A549 (cell line): ENCODE measurements at regions of chr11 and their contacts with region 1.

Region 1: GRCh38 chr11:66408488-66409214 is 12.2 kb upstream of the NPAS4 start:
- DNase-seq: peak; percentile 87 to 91
- ATAC-seq: peak; percentile 72 to 88
- H3K4me3 ChIP-seq: peak overlapping the region; percentile 47
- H3K27ac ChIP-seq: peak overlapping the region in 1 of 2 experiments; percentile 38; a peak in 1 of 6 replicates
- H3K4me1 ChIP-seq: no peaks in the 10 kb centered on the region
- CTCF ChIP-seq: peak; percentile 100
- EP300 ChIP-seq: no peak
- POLR2A ChIP-seq: no peak
- RAD21 ChIP-seq: peak; percentile 95 to 99

Region 2: GRCh38 chr11:66371627-66372415 is 36.8 kb before region 1 on chr11 and contains the start of gene SLC29A2:
- CTCF ChIA-PET with region 1: interaction called, 1,614 read pairs
- POLR2A ChIA-PET with region 1: no interaction called
- DNase-seq: peak; percentile 40 to 68
- ATAC-seq: peak; percentile 74 to 83
- H3K4me3 ChIP-seq: peak within 1 kb of the TSS; percentile 98
- H3K27ac ChIP-seq: peak within 1 kb of the TSS; percentile 84 to 85
- H3K4me1 ChIP-seq: peaks cover 17% of the 10 kb centered on the region; the same call in 1 of the 3 replicates
- CTCF ChIP-seq: no peak
- EP300 ChIP-seq: no peak
- POLR2A ChIP-seq: no peak
- RAD21 ChIP-seq: no peak
- polyA plus RNA-seq, gene SLC29A2: 2.6 and 3.9 TPM in 2 replicates

Region 3: DNA sequence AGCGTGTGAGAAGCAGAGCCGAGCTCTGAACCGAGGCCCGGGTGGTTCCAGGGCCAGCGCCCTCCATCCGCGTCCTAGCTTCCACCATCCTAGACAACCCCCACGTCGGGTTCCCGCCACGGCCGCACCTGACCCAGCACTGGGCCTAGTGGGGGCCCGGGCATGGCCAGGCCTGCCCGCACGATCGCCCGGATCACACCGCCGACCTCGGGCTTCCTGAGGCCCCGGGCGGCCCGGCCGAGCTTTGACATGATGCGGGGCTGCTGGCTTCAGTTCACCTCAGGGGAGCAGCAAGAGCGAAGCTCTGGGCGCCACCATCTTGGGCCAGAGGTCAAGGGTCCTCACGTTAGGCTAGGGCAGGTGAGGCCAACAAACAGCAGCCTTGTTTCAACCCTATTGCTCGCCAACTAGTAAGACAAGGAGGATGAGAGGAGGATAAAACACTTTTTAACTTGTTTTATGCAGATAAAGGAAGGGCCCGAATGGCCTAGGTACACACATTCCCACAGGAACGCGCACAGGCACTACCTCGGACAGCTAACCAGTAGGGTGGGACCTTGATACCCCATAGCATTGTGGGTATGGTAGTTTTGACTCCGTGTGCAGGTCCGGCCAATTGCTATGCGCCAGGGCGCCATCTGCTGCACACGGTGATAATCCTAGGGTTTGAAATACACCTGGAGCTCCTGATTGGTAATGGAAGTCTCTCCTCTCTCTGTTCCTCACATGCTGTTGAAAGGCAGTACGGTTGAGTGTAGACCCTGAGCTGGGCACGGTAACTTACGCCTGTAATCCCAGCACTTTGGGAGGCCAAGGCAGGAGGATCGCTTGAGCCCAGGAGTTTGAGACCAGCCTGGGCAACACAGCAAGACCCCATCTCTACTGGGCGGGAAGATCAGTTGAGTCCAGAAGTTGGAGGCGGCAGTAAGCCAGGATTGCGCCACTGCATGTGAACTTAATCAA is 30.1 kb after region 1 on chr11 and contains the start of gene MRPL11:
- CTCF ChIA-PET with region 1: interaction called, 1,614 read pairs
- POLR2A ChIA-PET with region 1: no interaction called
- DNase-seq: peak; percentile 94 to 98
- ATAC-seq: peak; percentile 95 to 97
- H3K4me3 ChIP-seq: peak within 1 kb of the TSS; percentile 69
- H3K27ac ChIP-seq: peak within 1 kb of the TSS; percentile 79 to 92
- H3K4me1 ChIP-seq: peaks cover 15% of the 10 kb centered on the region
- CTCF ChIP-seq: peak; percentile 78
- EP300 ChIP-seq: no peak
- POLR2A ChIP-seq: peak; percentile 40; the same call in 1 of the 2 replicates
- RAD21 ChIP-seq: peak; percentile 41 to 54; a peak in 4 of 5 replicates
- polyA plus RNA-seq, gene MRPL11: 62.9 and 70.1 TPM in 2 replicates

Region 4: DNA sequence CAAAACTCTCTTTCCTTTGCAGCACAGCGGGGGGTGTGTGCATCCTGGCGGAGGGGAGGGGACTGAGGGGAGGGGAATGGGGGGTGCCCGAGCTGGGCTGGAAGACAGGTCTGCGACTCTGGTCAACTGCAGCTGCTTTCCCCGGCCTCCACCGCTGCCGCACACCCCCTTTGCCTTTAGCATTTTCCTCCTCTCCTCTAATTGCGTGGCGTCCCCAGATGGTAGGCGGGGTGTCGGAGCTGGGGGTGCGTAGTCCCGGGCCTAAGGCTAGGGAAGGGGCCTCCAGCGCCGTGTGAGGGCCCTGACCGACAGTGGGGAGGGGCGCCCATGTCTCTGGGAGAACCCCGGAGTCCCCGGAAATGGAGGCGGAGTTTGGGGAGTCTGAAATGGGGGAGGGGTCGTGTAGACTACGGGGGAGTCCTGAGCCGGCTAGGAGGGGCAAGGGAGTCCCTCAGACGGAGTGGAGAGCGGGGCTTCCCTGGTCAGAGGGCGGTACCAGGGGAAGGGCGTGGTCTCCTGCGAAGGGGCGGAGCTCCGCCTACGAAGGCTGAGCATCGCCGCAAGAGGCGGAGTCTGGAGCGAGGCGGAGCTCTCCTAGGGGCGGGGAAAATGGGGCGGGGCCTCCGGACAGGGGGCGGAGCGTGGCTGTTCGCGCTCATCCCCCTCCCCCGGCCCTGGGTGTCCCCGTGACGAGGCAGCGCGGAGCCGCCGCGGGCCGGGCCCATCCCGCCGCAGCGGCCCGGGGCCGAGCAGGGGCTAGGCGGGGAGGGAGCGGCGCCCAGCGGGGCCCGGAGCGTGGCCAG is 57.8 kb after region 1 on chr11 and contains the start of gene PELI3:
- CTCF ChIA-PET with region 1: interaction called, 14 read pairs
- POLR2A ChIA-PET with region 1: no interaction called
- DNase-seq: peak; percentile 84 to 89
- ATAC-seq: peak; percentile 86 to 94
- H3K4me3 ChIP-seq: peak within 1 kb of the TSS; percentile 72
- H3K27ac ChIP-seq: peak within 1 kb of the TSS; percentile 76 to 95
- H3K4me1 ChIP-seq: peaks cover 10% of the 10 kb centered on the region
- CTCF ChIP-seq: no peak
- EP300 ChIP-seq: no peak
- POLR2A ChIP-seq: peak; percentile 17
- RAD21 ChIP-seq: no peak
- polyA plus RNA-seq, gene PELI3: 2.3 and 2.7 TPM in 2 replicates

Region 5: DNA sequence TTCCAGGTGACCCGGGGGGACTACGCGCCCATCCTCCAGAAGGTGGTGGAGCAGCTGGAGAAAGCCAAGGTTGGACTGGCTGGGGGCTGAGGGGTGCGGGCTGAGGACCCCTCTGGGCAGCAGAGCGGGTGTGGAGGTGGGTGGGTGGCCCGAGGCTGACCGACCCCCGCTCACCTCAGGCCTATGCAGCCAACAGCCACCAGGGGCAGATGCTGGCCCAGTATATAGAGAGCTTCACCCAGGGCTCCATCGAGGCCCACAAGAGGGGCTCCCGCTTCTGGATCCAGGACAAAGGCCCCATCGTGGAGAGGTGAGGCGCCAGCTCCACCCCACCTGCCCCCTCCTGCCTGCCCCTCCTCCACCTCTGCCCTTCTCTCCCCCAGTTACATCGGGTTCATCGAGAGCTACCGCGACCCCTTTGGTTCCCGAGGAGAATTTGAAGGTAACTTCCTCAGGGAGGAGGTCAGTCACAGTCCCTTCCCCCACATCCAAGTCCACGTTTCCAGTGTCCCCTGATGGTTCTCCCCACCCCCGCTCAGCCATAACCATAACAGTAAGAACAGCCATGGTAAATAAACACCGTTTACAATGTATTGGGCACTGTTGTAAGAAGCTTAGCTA is 82.8 kb after region 1 on chr11:
- CTCF ChIA-PET with region 1: interaction called, 13 read pairs
- POLR2A ChIA-PET with region 1: no interaction called
- DNase-seq: no peak
- ATAC-seq: peak; percentile 69 to 83; a peak in 4 of 6 replicates
- H3K4me3 ChIP-seq: no peak overlapping the region
- H3K27ac ChIP-seq: no peak overlapping the region
- H3K4me1 ChIP-seq: no peaks in the 10 kb centered on the region
- CTCF ChIP-seq: 0 out of 3 replicates have a peak, but pooled peaks have one; percentile 11
- EP300 ChIP-seq: no peak
- POLR2A ChIP-seq: no peak
- RAD21 ChIP-seq: no peak